ENCODE measurements at regions of chr17 and their contacts with region 1.

Region 1: GRCh38 chr17:81666342-81667191 is at the starts of genes CCDC137 and OXLD1:
- DNase-seq: peak; percentile 97
- ATAC-seq: peak; percentile 96 to 100 (median 99)
- H3K4me3 ChIP-seq: peak within 1 kb of the TSS; percentile 71 to 99 (median 94)
- H3K27ac ChIP-seq: peak within 1 kb of the TSS; percentile 30 to 97 (median 92)
- H3K4me1 ChIP-seq: peaks cover 6 to 29% (median 24%) of the 10 kb centered on the region in 9 donors
- H3K27me3 ChIP-seq: no peaks in the 10 kb centered on the region
- CTCF ChIP-seq: no peak
- total RNA-seq, gene CCDC137: 3.4 to 9.7 (median 5.4) TPM
- total RNA-seq, gene OXLD1: 12.6 to 21.6 (median 17.9) TPM

Region 2: DNA sequence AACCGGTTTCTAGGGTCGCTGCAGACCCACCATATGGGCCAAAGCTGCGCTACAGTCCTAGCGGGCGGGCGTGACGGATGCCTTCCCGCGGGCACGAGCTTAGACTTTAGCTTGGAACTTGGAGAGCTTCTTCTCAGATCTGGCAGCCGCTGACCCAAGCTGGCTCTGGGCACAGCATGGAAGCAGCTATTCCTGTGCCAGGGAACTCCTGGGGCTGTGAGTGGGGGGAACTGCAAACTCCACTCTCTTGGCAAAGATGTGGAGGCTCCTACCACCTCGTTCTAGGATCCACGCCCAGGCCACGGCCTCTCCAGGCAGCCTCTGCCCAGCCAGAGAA is 123.3 kb before region 1 on chr17:
- intact Hi-C with region 1: no loop called
- DNase-seq: peak in 1 of 2 donors; percentile 54
- ATAC-seq: peak; percentile 15 to 76 (median 60)
- H3K4me3 ChIP-seq: no peak overlapping the region
- H3K27ac ChIP-seq: peak overlapping the region in 4 of 10 donors; percentile 10 to 55 (median 38)
- H3K4me1 ChIP-seq: peaks cover 0 to 16% (median 5%) of the 10 kb centered on the region in 9 donors
- H3K27me3 ChIP-seq: no peaks in the 10 kb centered on the region
- CTCF ChIP-seq: no peak

Region 3: GRCh38 chr17:81553616-81554181 is 112.9 kb before region 1 on chr17:
- intact Hi-C with region 1: no loop called
- DNase-seq: no peak
- ATAC-seq: peak in 2 of 8 donors; percentile 1 to 23
- H3K4me3 ChIP-seq: peak overlapping the region in 8 of 10 donors; percentile 85 to 99 (median 97)
- H3K27ac ChIP-seq: peak overlapping the region in 8 of 10 donors; percentile 78 to 95 (median 93)
- H3K4me1 ChIP-seq: peaks cover 26 to 65% (median 55%) of the 10 kb centered on the region in 9 donors
- H3K27me3 ChIP-seq: no peaks in the 10 kb centered on the region
- CTCF ChIP-seq: no peak

Region 4: DNA sequence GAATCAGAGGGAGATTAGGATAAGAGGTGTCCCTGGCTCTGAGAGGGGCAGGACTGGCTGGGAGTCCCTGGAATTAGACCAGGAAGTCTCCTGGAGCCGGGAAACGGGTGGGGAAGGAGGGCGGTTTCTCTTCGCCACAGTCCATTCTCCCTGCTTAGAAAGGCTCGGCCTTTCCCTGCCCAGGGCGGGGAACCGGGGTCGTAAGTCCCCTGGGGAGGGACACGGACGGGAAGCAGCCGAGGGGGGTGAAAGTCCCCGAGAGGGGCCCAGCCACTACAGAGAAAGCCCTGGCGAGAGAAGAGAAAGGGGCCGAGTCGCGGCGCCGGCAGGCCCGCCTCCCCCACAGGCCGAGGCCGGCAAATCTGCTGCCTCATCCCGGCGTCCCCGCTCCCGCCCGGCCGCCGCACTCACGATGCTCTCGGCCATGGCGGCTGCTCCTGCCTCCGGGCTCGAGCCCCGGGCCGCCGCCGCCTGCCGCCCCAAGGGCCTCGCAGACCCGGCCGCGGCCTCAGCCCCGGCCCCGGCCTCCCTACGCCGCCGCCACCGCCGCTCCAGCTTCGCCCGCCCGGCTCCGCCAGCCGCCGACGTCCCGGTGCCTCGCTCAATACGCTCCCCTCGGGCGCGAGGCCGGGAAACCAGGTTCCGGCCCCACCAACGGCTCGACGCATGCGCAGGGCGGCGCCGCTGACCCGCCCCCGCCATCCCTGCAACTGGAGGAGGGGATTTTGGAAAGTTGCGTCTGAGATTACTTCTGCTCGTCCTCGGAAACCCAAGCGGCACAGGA is 29.9 kb before region 1 on chr17 and contains the starts of genes NPLOC4 and TSPAN10:
- intact Hi-C with region 1: loop called in 2 of 10 experiments (anchors 1 to 2 kb)
- DNase-seq: peak; percentile 80 to 90
- ATAC-seq: peak; percentile 84 to 94 (median 90)
- H3K4me3 ChIP-seq: peak within 1 kb of the TSS; percentile 51 to 99 (median 90)
- H3K27ac ChIP-seq: peak within 1 kb of the TSS; percentile 82 to 99 (median 96)
- H3K4me1 ChIP-seq: peaks cover 6 to 52% (median 34%) of the 10 kb centered on the region in 9 donors
- H3K27me3 ChIP-seq: no peaks in the 10 kb centered on the region
- CTCF ChIP-seq: no peak
- total RNA-seq, gene NPLOC4: 85.8 to 115 (median 98.8) TPM
- total RNA-seq, gene TSPAN10: 0.12 to 0.57 (median 0.27) TPM

Region 5: DNA sequence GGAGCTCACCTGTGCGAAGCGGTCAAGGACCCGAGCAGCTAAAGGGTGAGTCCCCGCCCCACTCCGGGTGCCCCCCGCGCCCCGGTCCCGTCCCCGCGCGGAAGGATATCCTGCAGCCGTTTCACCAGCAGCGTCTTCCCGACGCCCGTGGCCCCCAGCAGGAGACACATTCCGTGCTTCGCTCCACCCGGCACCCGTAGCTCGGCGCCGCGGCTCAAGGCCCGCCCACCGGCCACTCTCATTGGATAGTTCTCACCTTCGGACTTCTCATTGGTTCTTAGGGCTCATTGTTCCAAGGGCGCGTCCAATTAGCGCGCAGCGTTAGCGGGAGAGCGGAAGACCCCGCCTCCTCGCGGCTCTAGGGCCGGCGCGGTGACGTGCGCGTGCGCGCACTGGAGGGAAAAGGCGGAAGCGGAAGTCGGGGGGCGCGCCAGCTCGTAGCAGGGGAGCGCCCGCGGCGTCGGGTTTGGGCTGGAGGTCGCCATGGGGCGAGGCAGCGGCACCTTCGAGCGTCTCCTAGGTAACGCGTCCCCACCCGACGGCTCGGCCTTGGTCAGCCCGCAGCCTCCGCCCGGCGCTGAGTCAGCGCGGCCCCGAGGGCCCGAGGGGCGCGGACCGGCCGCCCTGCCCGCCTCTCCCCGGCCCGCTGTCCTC is 17.1 kb after region 1 on chr17 and contains the starts of genes ARL16 and HGS:
- intact Hi-C with region 1: loop called in 1 of 10 experiments (anchors 1 kb)
- DNase-seq: peak; percentile 98
- ATAC-seq: peak; percentile 95 to 99 (median 99)
- H3K4me3 ChIP-seq: peak within 1 kb of the TSS; percentile 71 to 100 (median 95)
- H3K27ac ChIP-seq: peak within 1 kb of the TSS in 9 of 10 donors; percentile 74 to 96 (median 91)
- H3K4me1 ChIP-seq: peaks cover 15 to 57% (median 32%) of the 10 kb centered on the region in 9 donors
- H3K27me3 ChIP-seq: no peaks in the 10 kb centered on the region
- CTCF ChIP-seq: no peak
- total RNA-seq, gene ARL16: 11.1 to 19.1 (median 15.7) TPM
- total RNA-seq, gene HGS: 33.1 to 53.7 (median 37.8) TPM